ENCODE measurements at regions of chr4 and their contacts with region 1.

Region 1: DNA sequence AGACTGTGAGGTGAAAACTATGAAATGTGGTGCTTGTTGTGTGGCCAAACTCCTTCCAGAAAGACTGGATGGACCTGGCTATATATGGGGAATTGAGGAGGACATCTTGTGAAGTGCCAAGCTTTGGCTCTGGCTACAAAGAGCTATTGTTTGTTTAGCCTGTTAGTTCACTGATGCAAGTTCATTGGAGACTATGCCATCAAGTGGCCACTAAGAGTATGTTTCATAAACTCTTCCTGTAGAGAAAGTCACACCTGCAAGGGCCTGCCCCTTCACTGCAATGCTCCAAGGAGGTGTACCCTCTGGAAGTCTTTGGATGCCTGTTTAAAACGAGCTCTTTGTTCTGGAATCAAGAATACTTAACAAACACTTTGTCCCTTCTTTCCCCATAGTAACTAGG is 382.0 kb downstream of the GABRG1 start:
- DNase-seq: no peak
- ATAC-seq: peak; percentile 90
- H3K4me3 Mint-ChIP-seq: no peak overlapping the region
- H3K27ac Mint-ChIP-seq: no peak overlapping the region
- H3K4me1 Mint-ChIP-seq: no peaks in the 10 kb centered on the region
- H3K27me3 Mint-ChIP-seq: no peaks in the 10 kb centered on the region
- CTCF ChIP-seq: no peak

Region 2: GRCh38 chr4:45453258-45453853 is 288.5 kb before region 1 on chr4:
- CTCF ChIA-PET with region 1: interaction called, 19 read pairs
- POLR2A ChIA-PET with region 1: no interaction called
- DNase-seq: no peak
- ATAC-seq: peak; percentile 97
- H3K4me3 Mint-ChIP-seq: no peak overlapping the region
- H3K27ac Mint-ChIP-seq: no peak overlapping the region
- H3K4me1 Mint-ChIP-seq: no peaks in the 10 kb centered on the region
- H3K27me3 Mint-ChIP-seq: no peaks in the 10 kb centered on the region
- CTCF ChIP-seq: no peak

Region 3: GRCh38 chr4:45662997-45663396 is 78.9 kb before region 1 on chr4:
- CTCF ChIA-PET with region 1: no interaction called
- POLR2A ChIA-PET with region 1: no interaction called
- DNase-seq: no peak
- ATAC-seq: no peak
- H3K4me3 Mint-ChIP-seq: no peak overlapping the region
- H3K27ac Mint-ChIP-seq: no peak overlapping the region
- H3K4me1 Mint-ChIP-seq: no peaks in the 10 kb centered on the region
- H3K27me3 Mint-ChIP-seq: no peaks in the 10 kb centered on the region
- CTCF ChIP-seq: no peak

Measured in WTC11 (cell line).